A549 (cell line): ENCODE measurements at regions of chr15 and their contacts with region 1.

Region 1: DNA sequence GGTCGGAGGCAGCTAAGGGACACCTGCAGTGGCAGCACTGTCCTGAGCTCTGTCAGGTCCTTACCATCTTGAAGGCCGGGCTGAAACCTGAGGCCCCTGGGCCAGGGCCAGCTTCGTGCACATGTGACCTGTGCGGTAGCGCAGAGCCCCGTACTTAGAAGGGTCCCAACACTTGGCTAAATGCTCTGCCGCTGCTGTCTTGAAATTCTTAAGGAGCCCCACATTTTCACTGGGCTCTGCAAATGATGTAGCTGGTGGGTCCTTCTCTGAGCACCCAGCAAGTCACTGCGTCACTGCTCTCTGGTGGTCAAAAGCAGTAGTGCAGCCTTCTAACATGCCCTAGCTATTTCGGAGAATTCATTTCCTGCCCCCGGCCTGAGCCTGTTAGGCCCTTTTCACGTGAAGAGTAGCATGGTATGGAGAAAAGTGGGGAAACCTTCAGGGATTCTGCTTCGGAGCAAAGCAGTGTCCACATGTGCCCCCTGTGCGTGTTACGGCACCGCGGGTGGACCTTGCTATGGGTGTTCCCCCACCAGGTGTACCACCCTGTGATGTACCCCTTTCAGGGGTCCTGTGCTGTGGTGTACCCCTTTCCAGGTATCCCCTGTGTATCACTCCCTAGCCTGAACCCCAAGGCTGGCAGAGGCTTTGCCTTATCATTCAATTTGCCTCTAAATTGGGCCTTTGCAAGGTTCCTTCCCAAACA is 79.7 kb downstream of the TMEM266 start:
- DNase-seq: peak; percentile 79 to 94
- ATAC-seq: peak; percentile 81 to 94
- H3K4me3 ChIP-seq: no peak overlapping the region
- H3K27ac ChIP-seq: no peak overlapping the region
- H3K4me1 ChIP-seq: no peaks in the 10 kb centered on the region
- CTCF ChIP-seq: peak; percentile 93
- EP300 ChIP-seq: no peak
- POLR2A ChIP-seq: no peak
- RAD21 ChIP-seq: peak; percentile 88 to 90

Region 2: GRCh38 chr15:75639709-75640482 is 499.6 kb before region 1 on chr15 and contains the start of gene IMP3:
- CTCF ChIA-PET with region 1: no interaction called
- POLR2A ChIA-PET with region 1: no interaction called
- DNase-seq: peak; percentile 99
- ATAC-seq: peak; percentile 89 to 95
- H3K4me3 ChIP-seq: peak within 1 kb of the TSS; percentile 67
- H3K27ac ChIP-seq: peak within 1 kb of the TSS; percentile 91 to 94
- H3K4me1 ChIP-seq: peaks cover 18% of the 10 kb centered on the region
- CTCF ChIP-seq: no peak
- EP300 ChIP-seq: no peak
- POLR2A ChIP-seq: peak; percentile 96
- RAD21 ChIP-seq: no peak
- polyA plus RNA-seq, gene IMP3: 80.6 and 94.7 TPM in 2 replicates

Region 3: GRCh38 chr15:75809986-75810750 is 329.4 kb before region 1 on chr15:
- CTCF ChIA-PET with region 1: interaction called, 71 read pairs
- POLR2A ChIA-PET with region 1: interaction called, 5 read pairs
- DNase-seq: peak; percentile 55 to 65
- ATAC-seq: peak; percentile 79 to 92
- H3K4me3 ChIP-seq: no peak overlapping the region
- H3K27ac ChIP-seq: no peak overlapping the region
- H3K4me1 ChIP-seq: no peaks in the 10 kb centered on the region
- CTCF ChIP-seq: peak; percentile 65
- EP300 ChIP-seq: no peak
- POLR2A ChIP-seq: no peak
- RAD21 ChIP-seq: peak; percentile 79 to 85

Region 4: DNA sequence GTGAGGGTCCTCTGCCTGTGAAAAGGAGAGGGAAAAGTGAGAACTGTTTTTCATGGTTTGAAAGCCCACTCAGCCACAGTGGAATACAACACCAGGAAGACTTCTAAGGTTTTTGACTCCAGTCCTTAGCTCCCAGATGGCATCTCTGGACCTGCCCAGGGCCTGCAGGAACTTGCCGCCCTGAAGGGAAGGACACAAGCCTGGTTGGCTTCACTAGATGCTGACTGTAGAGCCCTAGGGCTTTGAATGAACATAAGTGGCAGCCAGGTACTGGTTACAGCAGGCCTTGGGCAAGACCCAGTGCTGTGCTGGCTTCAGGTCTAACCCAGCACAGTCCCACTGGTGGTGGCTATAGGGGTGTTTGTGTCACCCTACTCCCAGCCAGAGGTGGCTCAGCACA is 101.0 kb before region 1 on chr15:
- CTCF ChIA-PET with region 1: interaction called, 12 read pairs
- POLR2A ChIA-PET with region 1: no interaction called
- DNase-seq: no peak
- ATAC-seq: no peak
- H3K4me3 ChIP-seq: no peak overlapping the region
- H3K27ac ChIP-seq: no peak overlapping the region
- H3K4me1 ChIP-seq: no peaks in the 10 kb centered on the region
- CTCF ChIP-seq: no peak
- EP300 ChIP-seq: no peak
- POLR2A ChIP-seq: no peak
- RAD21 ChIP-seq: no peak

Region 5: DNA sequence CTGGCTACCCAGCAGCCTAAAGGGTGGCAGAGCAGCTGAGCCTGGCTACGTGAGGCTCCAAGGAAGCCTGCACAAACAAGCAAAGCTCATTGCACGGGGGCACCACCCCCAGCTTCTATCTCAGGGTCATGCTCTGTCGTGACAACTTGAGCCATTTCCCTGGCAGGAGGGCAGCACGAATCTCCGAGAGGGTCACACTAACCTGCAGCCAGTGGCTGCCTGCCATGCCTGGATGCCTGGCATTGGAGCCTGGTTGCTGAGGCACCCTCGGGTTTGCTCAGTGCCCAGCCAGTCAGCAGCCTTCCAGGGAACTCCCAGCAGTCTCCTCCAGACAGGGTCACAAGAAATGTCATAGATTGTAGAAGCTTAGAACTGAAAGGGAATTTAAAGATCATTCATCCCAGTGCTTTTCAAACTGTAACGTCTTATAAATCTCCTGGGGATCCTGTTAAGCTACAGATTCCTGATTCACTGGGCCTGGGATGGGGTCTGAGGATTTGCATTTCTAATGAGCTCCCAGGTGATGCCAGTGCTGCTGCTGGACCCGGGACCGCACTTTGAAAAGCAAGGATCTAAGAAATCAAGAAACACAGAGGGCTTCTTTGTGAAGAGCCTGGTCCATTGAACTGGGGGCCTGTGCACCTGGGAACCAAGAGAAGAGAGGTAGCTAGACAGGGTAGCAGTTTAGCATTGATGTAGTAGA is 31.3 kb before region 1 on chr15:
- CTCF ChIA-PET with region 1: interaction called, 17 read pairs
- POLR2A ChIA-PET with region 1: no interaction called
- DNase-seq: no peak
- ATAC-seq: peak; percentile 32 to 58; a peak in 2 of 6 replicates
- H3K4me3 ChIP-seq: no peak overlapping the region
- H3K27ac ChIP-seq: no peak overlapping the region
- H3K4me1 ChIP-seq: no peaks in the 10 kb centered on the region
- CTCF ChIP-seq: no peak
- EP300 ChIP-seq: no peak
- POLR2A ChIP-seq: no peak
- RAD21 ChIP-seq: no peak

Region 6: GRCh38 chr15:76127880-76128279 is 11.6 kb before region 1 on chr15:
- CTCF ChIA-PET with region 1: interaction called, 44 read pairs
- POLR2A ChIA-PET with region 1: no interaction called
- DNase-seq: no peak
- ATAC-seq: no peak
- H3K4me3 ChIP-seq: no peak overlapping the region
- H3K27ac ChIP-seq: no peak overlapping the region
- H3K4me1 ChIP-seq: no peaks in the 10 kb centered on the region
- CTCF ChIP-seq: no peak
- EP300 ChIP-seq: no peak
- POLR2A ChIP-seq: no peak
- RAD21 ChIP-seq: no peak

Region 7: DNA sequence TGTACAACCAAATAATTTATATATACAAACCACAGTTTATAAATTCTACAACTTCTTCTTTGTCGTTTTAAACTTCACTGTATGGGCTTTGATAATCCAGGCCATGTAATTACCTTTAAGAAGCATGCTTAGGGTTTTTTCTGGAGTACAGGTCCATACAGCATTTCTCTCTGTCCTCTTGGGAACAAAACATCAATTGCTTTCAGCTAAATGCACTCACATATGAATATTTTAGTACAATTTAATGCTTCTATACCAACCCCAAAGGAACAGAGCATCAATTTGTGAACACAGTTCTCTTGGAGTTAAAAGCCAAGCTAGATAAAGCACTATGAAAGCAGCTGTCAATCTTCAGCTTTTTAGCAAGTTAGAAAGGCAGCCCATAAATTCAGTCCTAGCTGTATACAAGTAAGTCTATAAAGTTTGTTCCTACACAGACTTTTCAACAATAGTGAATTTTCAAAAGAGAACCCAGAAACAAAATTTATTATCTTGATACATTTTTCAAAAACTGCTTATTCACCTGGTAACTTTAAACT is 105.6 kb after region 1 on chr15:
- CTCF ChIA-PET with region 1: no interaction called
- POLR2A ChIA-PET with region 1: no interaction called
- DNase-seq: no peak
- ATAC-seq: no peak
- H3K4me3 ChIP-seq: no peak overlapping the region
- H3K27ac ChIP-seq: no peak overlapping the region
- H3K4me1 ChIP-seq: no peaks in the 10 kb centered on the region
- CTCF ChIP-seq: no peak
- EP300 ChIP-seq: no peak
- POLR2A ChIP-seq: no peak
- RAD21 ChIP-seq: no peak

Region 8: GRCh38 chr15:76345880-76346668 is 206.6 kb after region 1 on chr15:
- CTCF ChIA-PET with region 1: no interaction called
- POLR2A ChIA-PET with region 1: no interaction called
- DNase-seq: no peak
- ATAC-seq: no peak; a peak in 1 of 6 replicates
- H3K4me3 ChIP-seq: no peak overlapping the region
- H3K27ac ChIP-seq: no peak overlapping the region
- H3K4me1 ChIP-seq: peaks cover 9% of the 10 kb centered on the region; the same call in 2 of the 3 replicates
- CTCF ChIP-seq: no peak
- EP300 ChIP-seq: no peak
- POLR2A ChIP-seq: no peak
- RAD21 ChIP-seq: no peak